ENCODE measurements at regions of chr13 and their contacts with region 1.

Region 1: DNA sequence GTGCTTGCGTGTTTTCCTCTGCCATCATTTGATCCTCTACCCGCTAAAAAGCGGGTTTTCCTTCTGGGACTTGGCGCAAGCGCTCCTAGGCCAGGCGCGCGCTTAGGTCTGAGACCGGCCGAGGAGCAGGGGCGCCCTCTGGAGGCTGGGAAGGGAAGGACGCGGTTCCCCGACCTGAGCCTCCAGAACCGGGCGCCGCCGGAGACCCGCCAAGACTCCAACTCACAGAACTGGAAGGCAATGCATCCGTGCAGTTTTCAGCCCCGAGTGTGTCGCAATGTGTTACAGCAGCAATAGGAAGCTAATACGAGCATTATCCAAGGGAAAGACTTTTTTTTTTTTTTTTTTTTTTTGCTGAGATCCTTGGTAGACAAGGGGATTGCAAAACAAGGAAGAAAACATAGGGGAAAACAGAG is 190.9 kb downstream of the COL4A1 start:
- DNase-seq: peak; percentile 72
- CTCF ChIP-seq: peak; percentile 78

Region 2: DNA sequence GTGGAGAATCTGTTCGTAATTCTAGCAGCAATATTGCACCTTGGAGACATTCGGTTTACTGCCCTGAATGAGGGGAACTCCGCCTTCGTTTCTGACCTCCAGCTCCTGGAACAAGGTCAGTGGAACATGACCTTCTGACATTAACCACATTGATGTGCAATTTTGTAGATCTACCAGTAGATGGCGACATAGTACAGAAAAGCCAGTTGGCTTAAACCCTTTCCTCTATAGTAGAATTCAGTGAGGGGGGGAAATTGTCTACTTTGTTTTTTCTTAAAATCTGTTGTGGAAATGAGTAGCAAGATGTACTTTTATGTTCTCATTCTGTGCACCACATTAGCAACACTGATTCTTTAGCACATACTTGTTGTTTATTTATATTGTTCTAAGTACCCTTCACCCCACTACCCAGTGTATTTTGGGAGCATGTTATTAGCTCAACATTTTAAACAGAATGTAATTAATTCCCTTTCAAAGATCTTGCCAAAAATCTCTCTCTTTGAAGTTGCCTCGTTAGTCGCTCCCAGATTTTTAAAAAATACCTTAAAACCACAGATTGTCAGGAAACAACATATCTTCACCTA is 1154.4 kb before region 1 on chr13:
- in situ Hi-C with region 1: loop called (anchors 25 kb)
- DNase-seq: peak; percentile 49
- CTCF ChIP-seq: peak; percentile 67

Region 3: GRCh38 chr13:109331898-109332297 is 784.2 kb before region 1 on chr13:
- in situ Hi-C with region 1: no loop called
- DNase-seq: no peak
- CTCF ChIP-seq: no peak

Region 4: GRCh38 chr13:109747524-109747923 is 368.6 kb before region 1 on chr13:
- in situ Hi-C with region 1: no loop called
- DNase-seq: no peak
- CTCF ChIP-seq: no peak

Measured in GM13976 (cell line).